ENCODE measurements at regions of chr2 and their contacts with region 1.

Region 1: GRCh38 chr2:46776687-46777327 is 138.8 kb downstream of the MCFD2 start:
- DNase-seq: peak; percentile 46
- H3K4me3 ChIP-seq: no peak overlapping the region
- H3K27ac ChIP-seq: no peak overlapping the region
- H3K4me1 ChIP-seq: peaks cover 21% of the 10 kb centered on the region
- H3K27me3 ChIP-seq: no peaks in the 10 kb centered on the region
- CTCF ChIP-seq: peak; percentile 61 to 64

Region 2: GRCh38 chr2:46632349-46632748 is 144.5 kb before region 1 on chr2:
- CTCF ChIA-PET with region 1: no interaction called
- dilution Hi-C with region 1: no loop called
- in situ Hi-C with region 1: no loop called
- intact Hi-C with region 1: loop called (anchors 2 kb)
- DNase-seq: peak; percentile 41
- H3K4me3 ChIP-seq: no peak overlapping the region
- H3K27ac ChIP-seq: no peak overlapping the region
- H3K4me1 ChIP-seq: no peaks in the 10 kb centered on the region
- H3K27me3 ChIP-seq: peaks cover 8% of the 10 kb centered on the region
- CTCF ChIP-seq: peak; percentile 57 to 60

Region 3: DNA sequence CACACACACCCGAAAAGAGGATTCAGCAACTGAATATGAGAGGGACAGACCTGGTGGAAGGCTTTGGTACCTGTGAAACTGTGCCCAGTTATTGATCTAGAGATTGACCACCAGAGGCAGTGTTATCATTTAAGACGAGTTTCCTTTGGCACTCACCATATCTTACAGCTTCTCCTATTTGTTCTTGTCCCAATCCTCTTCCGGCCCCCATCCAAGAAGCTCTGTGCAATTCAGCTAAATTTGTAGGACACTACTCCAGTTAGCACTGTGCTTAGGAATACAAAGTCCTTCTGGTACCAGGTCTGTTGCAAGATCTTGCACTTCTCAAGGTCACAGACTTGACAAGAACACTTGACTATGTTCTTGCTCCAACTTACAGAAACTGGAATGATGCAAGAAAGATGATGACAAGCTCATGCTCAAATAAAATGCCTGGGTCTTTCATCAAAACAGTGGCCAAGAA is 119.7 kb before region 1 on chr2:
- CTCF ChIA-PET with region 1: no interaction called
- dilution Hi-C with region 1: no loop called
- in situ Hi-C with region 1: no loop called
- intact Hi-C with region 1: loop called (anchors 1 kb)
- DNase-seq: peak; percentile 25
- H3K4me3 ChIP-seq: no peak overlapping the region
- H3K27ac ChIP-seq: no peak overlapping the region
- H3K4me1 ChIP-seq: peaks cover 6% of the 10 kb centered on the region
- H3K27me3 ChIP-seq: no peaks in the 10 kb centered on the region
- CTCF ChIP-seq: peak; percentile 42 to 54

Region 4: GRCh38 chr2:46857893-46858701 is 81.3 kb after region 1 on chr2:
- CTCF ChIA-PET with region 1: interaction called, 3 read pairs
- dilution Hi-C with region 1: no loop called
- in situ Hi-C with region 1: no loop called
- intact Hi-C with region 1: loop called (anchors 5 kb)
- DNase-seq: peak; percentile 45
- H3K4me3 ChIP-seq: no peak overlapping the region
- H3K27ac ChIP-seq: no peak overlapping the region
- H3K4me1 ChIP-seq: peaks cover 43% of the 10 kb centered on the region
- H3K27me3 ChIP-seq: no peaks in the 10 kb centered on the region
- CTCF ChIP-seq: no peak

Measured in mammary epithelial cell (primary cell).